ENCODE measurements at regions of chr9 and their contacts with region 1.

Region 1: DNA sequence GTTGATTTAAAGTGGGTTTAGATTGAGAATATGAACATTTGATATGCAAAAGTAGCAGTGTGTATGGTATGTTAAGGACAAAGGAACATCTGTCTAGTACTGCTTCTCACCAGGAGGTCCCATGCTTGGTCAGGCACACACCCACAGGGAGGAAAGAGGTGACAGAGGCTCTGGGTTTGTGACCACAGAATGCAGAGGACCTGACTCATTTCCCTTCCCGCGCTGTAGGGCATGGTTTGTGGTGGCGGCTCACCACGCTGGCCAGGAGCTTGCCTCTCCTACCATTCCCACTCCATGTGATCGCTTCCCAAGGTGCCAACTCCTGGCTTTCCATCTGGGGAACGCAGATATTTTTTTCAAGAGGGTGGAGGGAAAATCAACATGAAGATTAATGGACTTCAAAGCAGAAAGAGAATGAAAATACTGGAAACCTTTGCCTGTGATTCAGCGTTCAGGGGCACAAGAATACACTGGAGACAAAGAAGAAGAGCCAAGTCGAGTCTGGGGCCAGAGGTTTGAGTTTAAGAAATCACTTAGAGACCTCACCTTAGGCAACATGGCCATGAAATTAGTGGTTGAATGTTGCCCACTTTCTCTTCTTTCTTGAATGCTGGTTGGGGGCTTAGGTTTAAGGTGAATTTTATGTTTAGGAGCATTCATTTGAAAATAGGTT is 477.8 kb downstream of the CCDC171 start:
- DNase-seq: no peak
- H3K4me3 Mint-ChIP-seq: no peak overlapping the region
- H3K27ac Mint-ChIP-seq: no peak overlapping the region
- H3K4me1 Mint-ChIP-seq: peaks cover 16% of the 10 kb centered on the region
- H3K27me3 Mint-ChIP-seq: peaks cover 15% of the 10 kb centered on the region

Region 2: DNA sequence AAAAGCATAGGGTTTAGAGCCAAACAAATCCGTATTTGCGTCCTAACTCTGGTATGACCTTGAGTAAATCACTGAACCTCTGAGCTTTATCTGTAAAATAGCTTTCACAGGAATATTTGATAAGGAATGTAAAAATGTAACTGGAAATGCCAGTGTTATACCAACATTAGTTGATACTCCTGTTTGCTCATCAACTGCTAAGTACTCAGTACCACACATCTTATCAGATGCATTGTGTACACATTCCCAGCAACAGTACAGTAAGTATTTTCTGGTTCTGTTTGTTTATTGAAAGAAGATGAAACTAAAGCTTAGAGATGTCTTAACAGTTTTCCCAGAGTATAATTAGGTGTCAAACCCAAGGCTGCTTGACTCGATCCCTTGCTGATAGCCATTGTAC is 586.5 kb before region 1 on chr9:
- intact Hi-C with region 1: no loop called
- DNase-seq: no peak
- H3K4me3 Mint-ChIP-seq: no peak overlapping the region
- H3K27ac Mint-ChIP-seq: no peak overlapping the region
- H3K4me1 Mint-ChIP-seq: peaks cover 11% of the 10 kb centered on the region
- H3K27me3 Mint-ChIP-seq: no peaks in the 10 kb centered on the region

Region 3: DNA sequence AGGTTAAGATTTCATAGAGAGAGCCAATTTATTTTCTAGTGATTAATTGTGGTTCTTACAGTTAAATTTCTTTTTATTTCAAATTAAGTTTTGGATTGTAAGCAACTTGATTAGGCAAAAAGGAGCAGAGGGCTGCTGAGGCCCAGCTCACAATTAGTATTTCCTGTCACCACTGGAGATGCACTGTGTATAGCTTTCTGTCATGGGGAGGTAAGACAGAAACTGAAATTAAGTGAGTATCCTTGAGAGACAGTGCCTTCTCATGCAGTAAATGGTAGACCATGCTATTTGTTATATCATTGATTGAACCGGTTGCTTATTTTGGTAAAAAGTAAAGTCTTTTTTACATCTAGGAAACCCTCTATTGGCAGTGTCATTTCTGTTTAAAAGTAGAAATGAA is 287.1 kb before region 1 on chr9:
- intact Hi-C with region 1: no loop called
- DNase-seq: no peak
- H3K4me3 Mint-ChIP-seq: no peak overlapping the region
- H3K27ac Mint-ChIP-seq: no peak overlapping the region
- H3K4me1 Mint-ChIP-seq: no peaks in the 10 kb centered on the region
- H3K27me3 Mint-ChIP-seq: no peaks in the 10 kb centered on the region

Region 4: GRCh38 chr9:15915711-15916110 is 114.9 kb before region 1 on chr9:
- intact Hi-C with region 1: no loop called
- DNase-seq: no peak
- H3K4me3 Mint-ChIP-seq: no peak overlapping the region
- H3K27ac Mint-ChIP-seq: no peak overlapping the region
- H3K4me1 Mint-ChIP-seq: no peaks in the 10 kb centered on the region
- H3K27me3 Mint-ChIP-seq: no peaks in the 10 kb centered on the region

Region 5: GRCh38 chr9:16126042-16126441 is 95.4 kb after region 1 on chr9:
- intact Hi-C with region 1: loop called (anchors 1 kb)
- DNase-seq: no peak
- H3K4me3 Mint-ChIP-seq: no peak overlapping the region
- H3K27ac Mint-ChIP-seq: no peak overlapping the region
- H3K4me1 Mint-ChIP-seq: no peaks in the 10 kb centered on the region
- H3K27me3 Mint-ChIP-seq: no peaks in the 10 kb centered on the region